ENCODE measurements at regions of chr6 and their contacts with region 1.

Region 1: DNA sequence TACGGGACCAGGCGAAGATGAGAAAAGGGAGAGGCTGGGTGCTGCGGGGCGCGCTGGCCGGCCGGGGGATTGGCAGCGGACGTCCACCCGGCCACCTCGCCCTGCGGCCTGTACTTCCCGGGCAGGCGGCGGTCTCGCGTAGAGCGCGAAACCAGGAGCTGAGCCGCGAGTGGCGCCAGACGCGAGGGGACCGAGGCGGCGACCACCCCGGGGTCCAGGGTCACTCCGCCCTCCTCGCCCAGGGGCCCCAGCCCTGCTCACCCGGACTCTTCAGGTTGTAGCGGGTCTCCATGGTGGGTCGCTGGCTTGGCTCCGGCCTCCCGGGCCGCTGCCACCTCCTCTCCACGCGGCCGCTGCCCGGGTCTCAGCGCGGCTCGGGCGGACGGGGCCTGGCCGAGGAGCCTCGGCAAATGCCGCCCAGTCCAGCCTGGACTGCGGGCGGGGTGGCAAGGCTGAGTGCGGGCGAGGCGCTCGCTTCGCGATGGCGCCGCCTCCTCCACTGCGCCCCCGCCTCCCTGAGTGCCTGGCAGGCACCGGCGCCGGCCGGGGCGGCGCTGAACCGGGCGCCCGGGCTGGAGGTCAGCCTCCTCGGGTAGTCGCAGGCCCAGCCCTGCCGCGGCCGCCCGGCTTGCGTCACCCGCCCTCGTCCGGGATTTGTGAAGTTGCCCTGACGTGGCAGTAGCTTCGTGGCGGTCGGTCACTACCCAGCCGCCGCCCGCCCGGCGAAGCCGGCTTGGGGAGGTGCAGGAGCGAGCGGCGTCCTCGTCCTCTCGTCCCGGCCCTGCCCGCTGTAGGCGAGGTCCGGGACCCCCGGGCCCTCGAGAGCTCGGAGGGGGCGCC is at the start of gene UBE2J1:
- DNase-seq: peak; percentile 75
- H3K4me3 Mint-ChIP-seq: peak within 1 kb of the TSS; percentile 96
- H3K27ac Mint-ChIP-seq: peak within 1 kb of the TSS; percentile 96
- H3K4me1 Mint-ChIP-seq: peaks cover 82% of the 10 kb centered on the region
- H3K27me3 Mint-ChIP-seq: no peaks in the 10 kb centered on the region
- total RNA-seq, gene UBE2J1: 38.1 and 40.5 TPM in 2 replicates

Region 2: GRCh38 chr6:89281779-89282246 is 70.7 kb before region 1 on chr6:
- intact Hi-C with region 1: loop called (anchors 5 kb)
- DNase-seq: peak; percentile 12
- H3K4me3 Mint-ChIP-seq: no peak overlapping the region
- H3K27ac Mint-ChIP-seq: no peak overlapping the region
- H3K4me1 Mint-ChIP-seq: peaks cover 5% of the 10 kb centered on the region
- H3K27me3 Mint-ChIP-seq: no peaks in the 10 kb centered on the region

Region 3: DNA sequence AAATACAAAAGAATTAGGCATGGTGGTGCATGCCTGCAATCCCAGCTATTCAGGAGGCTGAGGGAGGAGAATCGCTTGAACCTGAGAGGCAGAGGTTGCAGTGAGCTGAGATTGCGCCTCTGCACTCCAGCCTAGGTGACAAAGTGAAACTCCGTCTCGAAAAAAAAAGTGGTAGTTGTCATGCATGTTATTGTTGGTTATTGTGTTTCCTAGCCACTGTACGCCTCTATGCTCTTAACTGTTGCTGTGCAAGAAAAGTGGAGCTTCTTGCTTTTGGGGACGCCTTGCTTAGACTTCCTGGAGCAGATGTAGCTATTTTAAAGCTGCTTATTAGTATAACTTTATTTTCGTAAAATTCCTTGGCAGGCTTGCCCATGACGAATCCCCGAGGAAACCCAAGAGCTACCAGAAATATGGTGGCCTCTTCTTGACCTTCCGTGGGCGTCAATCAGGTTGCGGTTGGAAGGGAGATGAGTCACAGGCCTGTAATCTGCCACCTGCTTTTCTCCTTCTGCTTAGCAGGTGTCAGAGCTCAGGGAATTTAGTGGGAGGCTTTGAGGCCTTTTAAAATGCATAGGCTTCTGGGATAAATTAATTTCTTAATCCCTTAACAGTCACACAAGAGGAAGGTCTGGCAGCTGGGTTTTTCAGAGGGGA is 54.7 kb before region 1 on chr6:
- intact Hi-C with region 1: loop called (anchors 1 kb)
- DNase-seq: peak; percentile 64
- H3K4me3 Mint-ChIP-seq: peak overlapping the region; percentile 43
- H3K27ac Mint-ChIP-seq: peak overlapping the region; percentile 97
- H3K4me1 Mint-ChIP-seq: peaks cover 28% of the 10 kb centered on the region
- H3K27me3 Mint-ChIP-seq: peaks cover 2% of the 10 kb centered on the region

Region 4: GRCh38 chr6:89412071-89413005 is 59.8 kb after region 1 on chr6 and contains the start of gene RRAGD:
- intact Hi-C with region 1: loop called (anchors 2 kb)
- DNase-seq: peak; percentile 49
- H3K4me3 Mint-ChIP-seq: peak within 1 kb of the TSS; percentile 95
- H3K27ac Mint-ChIP-seq: peak within 1 kb of the TSS; percentile 94
- H3K4me1 Mint-ChIP-seq: peaks cover 25% of the 10 kb centered on the region
- H3K27me3 Mint-ChIP-seq: peaks cover 50% of the 10 kb centered on the region
- total RNA-seq, gene RRAGD: 7.8 and 10.1 TPM in 2 replicates

Region 5: GRCh38 chr6:89829591-89830385 is 477.3 kb after region 1 on chr6 and contains the start of gene CASP8AP2:
- intact Hi-C with region 1: loop called (anchors 5 kb)
- DNase-seq: peak; percentile 93
- H3K4me3 Mint-ChIP-seq: peak within 1 kb of the TSS; percentile 97
- H3K27ac Mint-ChIP-seq: peak within 1 kb of the TSS; percentile 91
- H3K4me1 Mint-ChIP-seq: peaks cover 23% of the 10 kb centered on the region
- H3K27me3 Mint-ChIP-seq: no peaks in the 10 kb centered on the region
- total RNA-seq, gene CASP8AP2: 38.3 and 40.2 TPM in 2 replicates